Prostate gland (tissue), 2 donors: ENCODE measurements at regions of chr21 and their contacts with region 1.

Region 1: DNA sequence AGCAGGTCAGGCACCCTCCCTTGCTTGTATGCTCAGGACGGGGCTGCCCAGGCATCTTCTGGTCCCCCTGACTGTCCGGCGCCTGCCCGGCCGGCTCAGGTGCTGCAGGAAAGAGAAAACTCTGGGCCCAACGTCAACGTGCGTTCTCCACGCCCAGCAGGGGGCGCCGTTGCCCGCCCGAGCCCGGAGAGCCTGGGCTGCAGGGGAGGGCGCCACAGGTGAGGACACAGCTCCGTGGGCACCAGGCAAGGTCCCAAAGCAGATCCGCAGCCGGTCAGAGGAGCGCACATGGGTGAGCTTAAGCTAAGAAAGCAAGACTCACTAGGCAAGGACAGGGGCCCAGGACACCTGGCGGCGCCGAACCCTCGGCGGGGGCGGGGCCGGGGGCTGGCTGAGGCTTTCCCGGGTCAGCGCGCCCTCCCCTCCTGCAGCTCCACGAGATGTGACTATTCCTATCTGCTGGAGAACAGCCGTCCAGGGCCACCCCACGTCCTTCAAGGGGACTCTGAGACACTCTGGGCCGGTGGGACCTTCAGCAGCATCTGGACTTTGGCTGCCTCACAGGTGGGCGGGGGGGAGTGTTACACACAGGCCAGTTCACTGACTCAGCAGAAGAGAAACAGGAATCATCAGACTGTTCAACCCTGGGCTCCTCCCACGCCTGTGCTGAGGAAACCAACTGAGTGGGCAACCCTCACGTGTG is 29.3 kb downstream of the KRTAP10-1 start:
- DNase-seq: peak; percentile 41
- H3K4me3 ChIP-seq: no peak overlapping the region
- H3K27ac ChIP-seq: no peak overlapping the region
- H3K4me1 ChIP-seq: no peaks in the 10 kb centered on the region
- H3K27me3 ChIP-seq: peaks cover 4% of the 10 kb centered on the region
- CTCF ChIP-seq: peak; percentile 83 to 89 (median 86)
- POLR2A ChIP-seq: no peak

Region 2: DNA sequence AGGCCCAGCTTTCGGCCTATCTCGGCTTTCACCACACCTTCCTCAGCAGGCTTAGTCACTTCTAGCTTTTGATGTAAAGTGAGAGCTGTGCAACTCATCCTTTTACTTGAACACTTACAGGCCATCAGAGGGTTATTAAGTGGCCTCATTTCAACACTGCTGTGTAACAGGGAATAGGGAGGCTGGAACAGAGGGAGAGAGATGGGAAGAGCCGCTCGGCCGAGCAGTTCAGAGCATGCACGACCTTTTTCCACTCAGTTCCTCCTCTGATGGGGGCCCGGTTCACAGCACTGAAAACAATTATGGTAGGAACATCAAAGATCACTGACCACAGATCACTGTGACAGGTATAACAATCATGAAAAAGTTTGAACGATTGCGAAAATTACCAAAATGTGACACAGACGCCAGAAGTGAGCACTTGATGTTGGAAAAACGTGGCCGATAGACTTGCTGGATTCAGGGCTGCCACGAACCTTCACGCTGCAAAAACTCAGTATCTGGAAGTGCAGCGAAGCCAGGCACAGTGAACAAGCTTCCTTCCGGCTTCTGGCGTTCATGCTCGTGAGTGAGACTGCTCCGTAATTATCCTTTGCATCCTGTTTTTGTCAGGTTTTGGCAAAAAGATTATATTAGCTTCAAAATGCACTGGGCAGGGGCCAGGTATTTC is 617.0 kb before region 1 on chr21:
- intact Hi-C with region 1: no loop called
- DNase-seq: no peak
- H3K4me3 ChIP-seq: no peak overlapping the region
- H3K27ac ChIP-seq: no peak overlapping the region
- H3K4me1 ChIP-seq: no peaks in the 10 kb centered on the region
- H3K27me3 ChIP-seq: no peaks in the 10 kb centered on the region
- CTCF ChIP-seq: no peak
- POLR2A ChIP-seq: no peak

Region 3: DNA sequence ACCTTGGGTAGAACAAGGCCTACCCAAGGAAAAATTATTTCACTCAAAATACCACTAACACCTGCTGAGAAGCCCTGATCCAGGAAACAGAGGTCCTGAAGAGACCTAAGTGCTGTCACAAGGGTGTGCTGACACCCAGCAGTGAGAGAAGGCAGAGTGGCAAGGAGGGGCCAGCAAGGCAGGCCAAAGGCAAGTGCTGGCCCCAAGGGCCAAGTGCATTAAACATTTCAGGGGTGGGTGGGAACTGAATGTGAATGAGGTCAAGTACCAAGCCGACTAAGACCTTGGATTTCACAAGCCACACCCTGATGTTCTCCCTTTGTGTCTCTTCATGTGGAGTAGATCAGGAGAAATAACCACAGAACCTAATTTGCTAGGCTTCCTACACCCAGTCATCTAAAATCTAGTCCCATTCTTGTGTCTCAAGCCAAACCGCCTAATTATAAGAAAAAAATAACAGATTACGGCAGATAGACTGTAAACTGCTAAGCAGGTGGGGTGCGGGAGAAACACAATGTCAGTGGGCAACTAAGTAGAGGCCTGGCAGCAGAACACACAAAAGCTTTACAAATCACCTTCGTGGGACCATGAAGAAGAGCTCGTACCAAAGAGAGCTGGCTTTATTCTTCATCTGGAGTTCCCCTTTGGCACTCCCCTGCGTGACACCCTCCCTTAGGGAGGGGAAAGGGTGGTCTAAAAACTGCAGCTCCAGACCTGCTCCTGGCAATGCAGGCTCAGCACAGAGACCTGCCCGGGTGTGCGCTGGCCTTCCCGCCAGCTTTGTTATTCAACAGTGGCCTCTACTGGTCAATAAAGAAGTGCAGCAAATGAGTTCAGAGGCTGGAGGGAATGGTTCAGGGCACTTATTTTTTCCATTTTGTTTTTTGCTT is 282.3 kb after region 1 on chr21:
- intact Hi-C with region 1: loop called (anchors 5 kb)
- DNase-seq: peak; percentile 47
- H3K4me3 ChIP-seq: no peak overlapping the region
- H3K27ac ChIP-seq: no peak overlapping the region
- H3K4me1 ChIP-seq: no peaks in the 10 kb centered on the region
- H3K27me3 ChIP-seq: no peaks in the 10 kb centered on the region
- CTCF ChIP-seq: peak; percentile 48 to 80 (median 70)
- POLR2A ChIP-seq: no peak

Region 4: DNA sequence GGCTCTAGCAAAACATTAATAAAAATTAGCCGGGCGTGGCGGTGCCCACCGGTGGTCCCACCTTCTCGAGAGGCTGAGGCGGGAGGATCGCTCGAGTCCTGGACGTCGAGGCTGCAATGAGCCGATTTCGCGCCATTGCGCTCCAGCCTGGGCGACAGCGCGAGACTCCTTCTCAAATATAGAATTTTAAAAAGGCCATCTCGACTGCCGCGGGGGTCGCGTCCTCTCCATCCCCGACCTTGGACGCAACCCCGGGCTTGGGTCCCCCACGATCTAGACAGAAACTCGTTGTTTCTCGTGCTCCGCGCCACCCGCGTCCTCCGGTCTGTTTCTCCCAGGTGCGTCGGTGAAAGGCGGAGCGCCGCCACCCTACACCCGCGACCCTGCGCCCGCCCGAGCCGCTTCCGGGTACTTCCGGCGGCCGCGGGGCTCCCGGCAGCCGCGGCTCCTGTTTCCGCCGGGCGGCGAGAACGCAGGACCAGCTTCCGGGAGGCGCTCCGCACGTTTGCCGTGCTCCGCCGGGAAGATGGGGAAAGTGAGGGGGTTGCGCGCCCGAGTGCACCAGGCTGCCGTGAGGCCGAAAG is 429.0 kb after region 1 on chr21 and contains the start of gene SLX9:
- intact Hi-C with region 1: loop called (anchors 10 kb)
- DNase-seq: peak; percentile 66
- H3K4me3 ChIP-seq: peak within 1 kb of the TSS; percentile 93 to 96
- H3K27ac ChIP-seq: peak within 1 kb of the TSS; percentile 76 to 82
- H3K4me1 ChIP-seq: peaks cover 6% of the 10 kb centered on the region
- H3K27me3 ChIP-seq: no peaks in the 10 kb centered on the region
- CTCF ChIP-seq: peak in 2 of 4 experiments; percentile 7 to 18
- POLR2A ChIP-seq: peak; percentile 36
- total RNA-seq, gene SLX9: 21.4 to 24.8 TPM

Region 5: GRCh38 chr21:44949779-44950198 is 439.1 kb after region 1 on chr21:
- intact Hi-C with region 1: no loop called
- DNase-seq: peak; percentile 84
- H3K4me3 ChIP-seq: no peak overlapping the region
- H3K27ac ChIP-seq: no peak overlapping the region
- H3K4me1 ChIP-seq: no peaks in the 10 kb centered on the region
- H3K27me3 ChIP-seq: no peaks in the 10 kb centered on the region
- CTCF ChIP-seq: peak; percentile 94 to 95 (median 95)
- POLR2A ChIP-seq: no peak